Activated CD4-positive, alpha-beta T cell treated with anti-CD3 and anti-CD28 coated beads, Interleukin-2, amount 10 ng/mL, durations not matched to agents 24 days and 14 days (primary cell): ENCODE measurements at regions of chr4 and their contacts with region 1.

Region 1: GRCh38 chr4:81648576-81649275 is 177.0 kb upstream of the RASGEF1B start:
- DNase-seq: peak; percentile 85
- H3K4me3 Mint-ChIP-seq: peak overlapping the region; percentile 62
- H3K27ac Mint-ChIP-seq: peak overlapping the region; percentile 76
- H3K4me1 Mint-ChIP-seq: peaks cover 57% of the 10 kb centered on the region
- H3K27me3 Mint-ChIP-seq: no peaks in the 10 kb centered on the region

Region 2: GRCh38 chr4:81494031-81494431 is 154.7 kb before region 1 on chr4:
- intact Hi-C with region 1: loop called (anchors 2 kb)
- DNase-seq: no peak
- H3K4me3 Mint-ChIP-seq: peak overlapping the region; percentile 70
- H3K27ac Mint-ChIP-seq: peak overlapping the region; percentile 72
- H3K4me1 Mint-ChIP-seq: peaks cover 37% of the 10 kb centered on the region
- H3K27me3 Mint-ChIP-seq: peaks cover 1% of the 10 kb centered on the region

Region 3: GRCh38 chr4:81589262-81589661 is 59.5 kb before region 1 on chr4:
- intact Hi-C with region 1: loop called (anchors 1 kb)
- DNase-seq: no peak
- H3K4me3 Mint-ChIP-seq: no peak overlapping the region
- H3K27ac Mint-ChIP-seq: no peak overlapping the region
- H3K4me1 Mint-ChIP-seq: peaks cover 6% of the 10 kb centered on the region
- H3K27me3 Mint-ChIP-seq: no peaks in the 10 kb centered on the region

Region 4: GRCh38 chr4:81631958-81632441 is 16.7 kb before region 1 on chr4:
- intact Hi-C with region 1: no loop called
- DNase-seq: no peak
- H3K4me3 Mint-ChIP-seq: no peak overlapping the region
- H3K27ac Mint-ChIP-seq: no peak overlapping the region
- H3K4me1 Mint-ChIP-seq: peaks cover 7% of the 10 kb centered on the region
- H3K27me3 Mint-ChIP-seq: no peaks in the 10 kb centered on the region

Region 5: DNA sequence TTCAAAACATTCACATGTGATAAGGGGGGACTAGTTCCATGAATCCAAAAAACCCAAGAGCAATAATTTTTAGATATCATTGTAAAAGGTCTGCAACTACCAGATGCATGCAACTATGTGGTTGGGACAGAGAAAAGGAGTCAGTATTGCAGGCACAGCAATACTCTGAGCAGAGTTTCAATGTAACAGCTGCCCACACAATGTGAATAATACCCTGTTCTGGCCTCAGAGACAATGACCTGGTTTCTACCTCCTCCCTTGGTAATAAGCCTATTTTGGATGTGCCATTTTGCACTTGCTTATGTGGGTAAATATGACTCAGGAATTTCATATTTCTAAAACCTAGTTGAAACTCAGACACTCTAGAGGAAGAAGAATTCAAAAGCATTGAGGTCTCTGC is 17.8 kb after region 1 on chr4:
- intact Hi-C with region 1: loop called (anchors 1 kb)
- DNase-seq: no peak
- H3K4me3 Mint-ChIP-seq: no peak overlapping the region
- H3K27ac Mint-ChIP-seq: peak overlapping the region; percentile 27
- H3K4me1 Mint-ChIP-seq: peaks cover 16% of the 10 kb centered on the region
- H3K27me3 Mint-ChIP-seq: no peaks in the 10 kb centered on the region

Region 6: DNA sequence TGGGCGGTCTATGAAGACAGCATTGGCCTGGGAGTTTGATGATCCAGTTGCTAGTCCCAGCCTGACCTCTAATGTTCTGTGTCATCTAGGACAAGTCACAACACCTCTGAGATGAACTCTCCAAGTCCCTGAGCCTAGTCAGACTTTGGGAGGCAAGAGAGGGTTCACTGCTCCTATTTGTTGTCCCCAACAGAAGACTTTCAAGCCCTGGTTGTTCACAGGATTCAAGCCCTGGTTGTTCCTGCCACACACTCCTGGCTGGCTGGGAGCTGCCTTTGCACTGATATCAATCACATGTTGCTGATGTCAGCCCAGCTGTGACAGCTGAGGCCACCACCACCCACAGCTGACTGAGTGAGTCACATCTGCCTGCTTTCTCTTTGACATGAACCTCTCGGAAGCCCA is 76.2 kb after region 1 on chr4:
- intact Hi-C with region 1: loop called (anchors 5 kb)
- DNase-seq: peak; percentile 81
- H3K4me3 Mint-ChIP-seq: no peak overlapping the region
- H3K27ac Mint-ChIP-seq: peak overlapping the region; percentile 72
- H3K4me1 Mint-ChIP-seq: peaks cover 9% of the 10 kb centered on the region
- H3K27me3 Mint-ChIP-seq: peaks cover 10% of the 10 kb centered on the region

Region 7: DNA sequence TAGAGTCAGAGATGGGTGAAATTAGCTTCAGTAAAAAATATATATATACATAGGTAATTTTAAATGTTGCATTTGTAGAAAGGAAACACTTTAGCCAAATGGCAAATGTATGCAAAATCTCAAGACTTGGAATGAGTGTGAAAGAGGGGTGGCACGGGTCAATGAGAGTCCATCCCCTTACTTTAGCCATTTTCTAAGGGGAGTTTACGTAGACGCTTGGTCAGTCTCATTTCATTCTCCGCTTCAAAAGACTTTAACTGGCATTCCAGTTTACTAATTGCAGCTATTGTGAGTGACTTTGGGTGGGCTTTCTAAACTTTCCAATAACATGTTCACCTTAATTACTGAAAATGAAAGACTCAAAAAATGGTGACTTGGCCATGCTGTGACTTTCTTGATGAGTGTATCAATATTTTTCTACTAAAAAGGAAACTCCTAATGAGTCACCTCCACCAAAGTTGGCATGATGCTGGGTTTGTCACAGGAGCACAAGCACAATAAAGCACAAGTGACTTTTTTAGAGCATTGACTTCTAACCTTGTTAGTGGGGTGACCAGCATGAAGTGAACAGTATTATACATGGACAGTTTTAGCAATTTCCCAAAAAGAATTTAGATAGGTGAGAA is 179.0 kb after region 1 on chr4:
- intact Hi-C with region 1: loop called (anchors 5 kb)
- DNase-seq: no peak
- H3K4me3 Mint-ChIP-seq: no peak overlapping the region
- H3K27ac Mint-ChIP-seq: peak overlapping the region; percentile 71
- H3K4me1 Mint-ChIP-seq: peaks cover 9% of the 10 kb centered on the region
- H3K27me3 Mint-ChIP-seq: no peaks in the 10 kb centered on the region

Region 8: DNA sequence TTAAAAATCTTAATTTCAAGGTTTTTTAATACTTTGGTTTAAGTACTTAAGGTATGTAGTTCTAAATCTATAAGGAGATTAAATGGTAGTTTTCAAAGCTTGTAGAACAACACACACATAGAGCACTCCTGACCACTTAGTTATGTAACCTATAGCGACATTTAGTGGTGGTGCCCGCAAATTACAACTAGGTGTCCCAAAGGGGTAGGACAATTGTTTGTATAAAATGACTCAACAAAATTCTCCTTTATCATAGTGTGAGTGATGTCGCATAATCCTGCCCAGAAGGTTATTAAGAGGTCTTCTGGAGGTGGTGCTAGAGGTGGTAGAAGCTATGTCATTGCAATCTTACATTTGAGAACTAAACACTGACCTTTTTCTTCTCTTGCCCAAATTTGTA is 196.0 kb after region 1 on chr4:
- intact Hi-C with region 1: loop called (anchors 5 kb)
- DNase-seq: peak; percentile 90
- H3K4me3 Mint-ChIP-seq: no peak overlapping the region
- H3K27ac Mint-ChIP-seq: no peak overlapping the region
- H3K4me1 Mint-ChIP-seq: peaks cover 4% of the 10 kb centered on the region
- H3K27me3 Mint-ChIP-seq: no peaks in the 10 kb centered on the region

Region 9: GRCh38 chr4:82629238-82630000 is 980.7 kb after region 1 on chr4:
- intact Hi-C with region 1: no loop called
- DNase-seq: no peak
- H3K4me3 Mint-ChIP-seq: no peak overlapping the region
- H3K27ac Mint-ChIP-seq: no peak overlapping the region
- H3K4me1 Mint-ChIP-seq: no peaks in the 10 kb centered on the region
- H3K27me3 Mint-ChIP-seq: no peaks in the 10 kb centered on the region